ENCODE measurements at regions of chr1 and their contacts with region 1.

Region 1: DNA sequence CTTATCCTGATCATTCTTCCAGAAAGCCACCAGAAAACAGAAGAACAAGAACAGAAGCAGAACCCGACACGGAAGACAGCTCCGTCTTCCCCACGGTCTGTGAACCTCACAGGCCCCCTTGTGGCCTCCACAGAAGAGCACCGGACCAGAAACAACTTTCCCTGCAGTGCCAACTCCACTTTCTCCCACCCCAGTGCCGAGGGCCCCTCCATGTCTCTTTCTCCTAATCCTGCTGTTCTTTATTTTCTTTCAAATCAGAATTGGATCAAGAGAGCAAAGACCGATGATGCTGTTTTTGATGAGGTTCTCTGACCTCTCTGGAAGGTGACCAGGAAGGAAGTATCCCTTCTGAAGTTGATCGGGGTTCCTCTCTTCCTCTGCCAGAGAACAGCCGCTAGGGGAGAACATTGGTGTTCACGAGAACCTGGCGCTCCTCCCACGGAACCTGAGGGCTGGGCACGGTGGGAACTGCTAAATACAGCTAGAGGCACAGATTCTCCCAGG is 58.9 kb upstream of the CTTNBP2NL start:
- DNase-seq: peak in 4 of 5 donors; percentile 45 to 66 (median 50)
- ATAC-seq: peak; percentile 66 to 94 (median 86)
- H3K4me3 ChIP-seq: peak overlapping the region in 3 of 12 donors; percentile 2 to 17 (median 8)
- H3K27ac ChIP-seq: no peak overlapping the region
- H3K4me1 ChIP-seq: peaks cover 0 to 5% (median 0%) of the 10 kb centered on the region in 12 donors
- H3K27me3 ChIP-seq: no peaks in the 10 kb centered on the region
- CTCF ChIP-seq: peak; percentile 47 to 83 (median 71)
- POLR2A ChIP-seq: no peak

Region 2: GRCh38 chr1:111789666-111790316 is 547.3 kb before region 1 on chr1:
- intact Hi-C with region 1: loop called in 8 of 10 experiments (anchors 5 to 10 kb)
- DNase-seq: no peak
- ATAC-seq: peak in 2 of 4 donors; percentile 66 to 67
- H3K4me3 ChIP-seq: no peak overlapping the region
- H3K27ac ChIP-seq: no peak overlapping the region
- H3K4me1 ChIP-seq: peaks cover 0 to 8% (median under 1%) of the 10 kb centered on the region in 12 donors
- H3K27me3 ChIP-seq: no peaks in the 10 kb centered on the region
- CTCF ChIP-seq: peak in 7 of 12 donors; percentile 10 to 43 (median 28)
- POLR2A ChIP-seq: no peak

Region 3: DNA sequence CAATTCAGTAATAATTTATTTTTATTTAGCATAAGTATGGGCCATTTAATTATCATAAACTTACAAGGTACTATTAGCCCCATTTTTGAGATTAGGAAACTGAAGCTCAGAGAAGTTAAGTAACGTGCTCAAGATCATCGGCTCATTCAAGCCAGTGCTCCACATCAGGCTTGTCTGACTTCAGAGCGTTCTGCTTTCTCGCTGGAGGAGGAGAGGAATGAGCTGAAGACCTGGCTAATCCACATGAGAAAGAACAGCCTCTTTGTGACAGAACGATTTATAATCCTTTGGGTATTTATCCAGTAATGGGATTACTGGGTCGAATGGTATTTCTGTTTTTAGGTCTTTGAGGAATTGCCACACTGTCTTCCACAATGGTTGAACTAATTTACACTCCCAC is 541.7 kb before region 1 on chr1:
- intact Hi-C with region 1: loop called in 7 of 10 experiments (anchors 5 to 10 kb)
- DNase-seq: no peak
- ATAC-seq: no peak
- H3K4me3 ChIP-seq: no peak overlapping the region
- H3K27ac ChIP-seq: no peak overlapping the region
- H3K4me1 ChIP-seq: peaks cover 0 to 8% (median 0%) of the 10 kb centered on the region in 12 donors
- H3K27me3 ChIP-seq: no peaks in the 10 kb centered on the region
- CTCF ChIP-seq: no peak
- POLR2A ChIP-seq: no peak

Region 4: GRCh38 chr1:111880881-111881837 is 455.9 kb before region 1 on chr1:
- intact Hi-C with region 1: loop called in 3 of 10 experiments (anchors 5 to 10 kb)
- DNase-seq: peak in 3 of 5 donors; percentile 36 to 72 (median 44)
- ATAC-seq: peak; percentile 27 to 73 (median 52)
- H3K4me3 ChIP-seq: no peak overlapping the region
- H3K27ac ChIP-seq: peak overlapping the region in 4 of 12 donors; percentile 12 to 53 (median 36)
- H3K4me1 ChIP-seq: peaks cover 0 to 60% (median 28%) of the 10 kb centered on the region in 12 donors
- H3K27me3 ChIP-seq: no peaks in the 10 kb centered on the region
- CTCF ChIP-seq: no peak
- POLR2A ChIP-seq: no peak

Region 5: DNA sequence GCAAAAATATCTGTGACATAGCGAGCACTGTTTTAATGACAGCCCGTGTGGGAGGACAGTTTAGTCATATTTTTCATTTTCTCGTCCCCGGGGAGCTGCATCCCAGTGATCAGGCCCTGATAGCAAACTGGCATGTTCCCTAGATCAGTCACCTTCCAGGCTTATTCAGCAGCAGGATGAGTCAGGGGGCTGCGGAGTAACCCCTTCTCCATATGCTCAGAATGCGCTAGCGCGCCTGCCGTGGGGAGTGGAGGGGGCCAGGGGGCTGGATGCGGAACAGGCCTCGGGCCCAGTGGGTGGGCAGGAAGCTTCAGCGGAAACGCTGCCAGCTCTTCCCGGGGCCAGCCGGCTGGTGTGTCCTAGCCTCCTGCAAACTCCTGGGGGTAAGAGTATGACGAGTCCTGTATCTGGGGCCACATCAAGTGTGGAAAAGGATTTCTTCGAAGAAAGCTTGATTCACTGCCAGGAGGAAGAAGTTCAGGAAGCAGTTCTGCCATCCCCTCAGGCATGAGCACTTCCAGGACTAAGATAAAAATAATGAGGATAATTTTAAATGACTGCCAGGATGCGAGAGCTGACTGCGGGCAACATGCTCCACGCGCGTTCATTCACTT is 441.5 kb before region 1 on chr1:
- intact Hi-C with region 1: loop called in 1 of 10 experiments (anchors 10 kb)
- DNase-seq: no peak
- ATAC-seq: peak in 1 of 4 donors; percentile 5
- H3K4me3 ChIP-seq: no peak overlapping the region
- H3K27ac ChIP-seq: no peak overlapping the region
- H3K4me1 ChIP-seq: no peaks in the 10 kb centered on the region
- H3K27me3 ChIP-seq: no peaks in the 10 kb centered on the region
- CTCF ChIP-seq: no peak
- POLR2A ChIP-seq: no peak

Region 6: DNA sequence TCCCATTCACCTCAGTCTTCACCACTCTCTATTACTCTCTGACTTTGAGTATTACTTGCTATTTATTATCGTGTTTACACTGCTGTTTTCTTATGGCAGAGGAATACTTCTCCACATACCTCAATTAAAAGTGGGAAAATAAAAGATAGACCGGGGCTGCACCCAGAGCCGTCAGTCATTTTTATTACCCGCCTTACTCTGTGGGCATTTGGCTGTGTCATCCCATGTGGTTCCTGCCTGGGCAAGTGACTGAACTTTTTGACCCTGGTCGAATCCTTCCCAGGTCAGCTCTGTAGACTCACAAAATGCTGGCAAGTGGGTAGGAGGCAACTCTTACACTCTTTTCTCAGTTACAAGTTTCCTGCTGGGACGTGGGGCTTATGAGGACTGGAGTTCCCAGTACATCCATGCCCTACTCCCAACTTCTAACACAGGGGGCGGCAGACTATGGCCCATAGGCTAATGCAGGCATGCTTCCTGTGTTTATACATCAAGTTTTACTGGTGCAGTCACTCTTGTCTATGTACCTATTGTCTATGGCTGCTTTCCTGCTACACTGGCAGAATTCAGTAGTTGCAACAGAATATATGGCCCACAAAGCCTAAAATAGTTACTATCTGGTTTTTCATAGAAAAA is 278.1 kb before region 1 on chr1:
- intact Hi-C with region 1: loop called in 1 of 10 experiments (anchors 10 kb)
- DNase-seq: no peak
- ATAC-seq: no peak
- H3K4me3 ChIP-seq: no peak overlapping the region
- H3K27ac ChIP-seq: no peak overlapping the region
- H3K4me1 ChIP-seq: peaks cover 0 to 47% (median 15%) of the 10 kb centered on the region in 12 donors
- H3K27me3 ChIP-seq: no peaks in the 10 kb centered on the region
- CTCF ChIP-seq: no peak
- POLR2A ChIP-seq: no peak

Region 7: DNA sequence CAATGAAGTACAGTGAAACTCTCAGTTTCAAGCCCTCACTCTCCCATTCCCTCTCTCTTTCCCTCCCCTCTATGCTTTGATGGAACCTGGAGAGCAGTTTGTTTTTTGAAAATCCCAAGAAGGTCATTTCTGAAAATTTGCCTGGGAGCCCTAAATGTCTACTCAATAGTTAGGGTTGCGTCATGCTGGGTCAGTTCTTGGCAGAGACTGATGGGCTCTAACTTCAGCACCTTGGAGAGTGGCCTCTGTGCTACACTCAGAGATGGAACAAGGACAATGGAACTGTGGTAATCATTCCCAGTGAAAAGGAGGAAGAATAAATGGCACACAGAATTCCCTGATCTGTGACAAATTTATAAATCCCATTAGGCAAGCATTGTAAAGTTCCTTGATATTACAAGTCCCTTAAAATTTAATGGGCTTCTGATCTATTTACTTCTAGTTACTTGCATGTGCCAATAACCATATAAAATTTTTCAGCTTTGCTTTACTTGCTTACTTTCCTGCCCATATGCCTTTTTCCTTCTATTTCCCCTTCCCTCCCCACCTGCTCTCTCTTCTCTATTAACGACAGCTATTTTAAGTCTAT is 164.7 kb before region 1 on chr1:
- intact Hi-C with region 1: loop called in 1 of 10 experiments (anchors 10 kb)
- DNase-seq: peak in 4 of 5 donors; percentile 15 to 49 (median 38)
- ATAC-seq: peak in 2 of 4 donors; percentile 70 to 79
- H3K4me3 ChIP-seq: no peak overlapping the region
- H3K27ac ChIP-seq: no peak overlapping the region
- H3K4me1 ChIP-seq: no peaks in the 10 kb centered on the region
- H3K27me3 ChIP-seq: peaks cover 0 to 5% (median 0%) of the 10 kb centered on the region in 9 donors
- CTCF ChIP-seq: no peak
- POLR2A ChIP-seq: no peak

Region 8: DNA sequence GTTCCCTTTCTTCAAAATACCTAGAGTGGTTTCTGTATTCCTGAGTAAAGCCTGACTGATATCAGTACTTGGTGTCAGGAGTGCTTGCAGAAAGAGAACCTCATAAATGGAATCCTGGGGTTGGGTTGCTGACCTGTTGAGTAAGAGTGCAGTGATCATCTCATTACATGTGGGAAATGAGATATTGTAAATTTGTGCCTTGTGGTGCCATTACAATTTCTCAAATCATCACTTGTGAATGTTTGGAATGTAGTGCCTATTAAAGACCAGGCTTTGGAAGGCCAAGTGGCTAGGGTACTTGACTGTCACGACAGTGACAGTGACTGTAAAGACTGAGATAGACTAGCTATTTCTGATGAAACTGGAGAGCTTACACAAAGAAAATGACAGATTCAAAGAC is 117.8 kb before region 1 on chr1:
- intact Hi-C with region 1: no loop called
- DNase-seq: no peak
- ATAC-seq: no peak
- H3K4me3 ChIP-seq: no peak overlapping the region
- H3K27ac ChIP-seq: no peak overlapping the region
- H3K4me1 ChIP-seq: no peaks in the 10 kb centered on the region
- H3K27me3 ChIP-seq: no peaks in the 10 kb centered on the region
- CTCF ChIP-seq: no peak
- POLR2A ChIP-seq: no peak